Heart right ventricle (tissue), 16 donors: ENCODE measurements at regions of chr7 and their contacts with region 1.

Region 1: DNA sequence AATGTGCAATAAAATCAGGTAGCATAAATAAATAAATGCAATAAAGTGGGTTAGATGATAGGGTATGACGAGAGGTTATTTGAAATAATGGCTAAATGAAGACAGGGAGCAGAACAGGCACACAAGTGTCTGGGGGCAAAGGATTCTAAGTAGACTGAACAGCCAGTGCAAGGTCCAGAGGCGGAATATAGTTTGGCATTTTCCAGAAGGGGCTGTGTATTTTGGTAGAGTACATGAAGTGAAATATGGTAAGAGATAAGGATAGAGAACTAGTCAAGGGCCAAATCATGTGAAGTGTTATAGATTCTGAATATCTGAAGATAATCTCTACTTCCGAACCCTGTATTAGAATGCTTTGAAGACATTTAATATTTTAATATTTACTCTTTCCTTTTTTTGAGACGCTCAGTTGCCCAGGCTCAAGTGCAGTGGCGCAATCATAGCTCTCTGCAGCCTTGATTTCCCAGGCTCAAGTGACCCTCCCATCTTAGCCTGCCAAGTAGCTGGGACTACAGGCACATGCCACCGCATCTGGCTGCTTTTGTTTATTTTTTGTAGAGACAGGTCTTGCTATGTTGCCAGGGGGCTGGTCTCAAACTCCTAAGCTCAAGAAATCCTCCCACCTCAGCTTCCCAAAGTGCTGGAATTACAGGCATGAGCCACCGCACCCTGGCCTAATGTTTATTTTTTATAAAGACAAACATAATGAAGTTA is 44.4 kb upstream of the CD36 start:
- DNase-seq: peak in 1 of 2 donors; percentile 24
- ATAC-seq: peak in 6 of 8 donors; percentile 46 to 87 (median 64)
- H3K4me3 ChIP-seq: peak overlapping the region in 1 of 10 donors; percentile 7
- H3K27ac ChIP-seq: peak overlapping the region; percentile 45 to 87 (median 66)
- H3K4me1 ChIP-seq: peaks cover 2 to 78% (median 45%) of the 10 kb centered on the region in 9 donors
- H3K27me3 ChIP-seq: no peaks in the 10 kb centered on the region
- CTCF ChIP-seq: no peak

Region 2: DNA sequence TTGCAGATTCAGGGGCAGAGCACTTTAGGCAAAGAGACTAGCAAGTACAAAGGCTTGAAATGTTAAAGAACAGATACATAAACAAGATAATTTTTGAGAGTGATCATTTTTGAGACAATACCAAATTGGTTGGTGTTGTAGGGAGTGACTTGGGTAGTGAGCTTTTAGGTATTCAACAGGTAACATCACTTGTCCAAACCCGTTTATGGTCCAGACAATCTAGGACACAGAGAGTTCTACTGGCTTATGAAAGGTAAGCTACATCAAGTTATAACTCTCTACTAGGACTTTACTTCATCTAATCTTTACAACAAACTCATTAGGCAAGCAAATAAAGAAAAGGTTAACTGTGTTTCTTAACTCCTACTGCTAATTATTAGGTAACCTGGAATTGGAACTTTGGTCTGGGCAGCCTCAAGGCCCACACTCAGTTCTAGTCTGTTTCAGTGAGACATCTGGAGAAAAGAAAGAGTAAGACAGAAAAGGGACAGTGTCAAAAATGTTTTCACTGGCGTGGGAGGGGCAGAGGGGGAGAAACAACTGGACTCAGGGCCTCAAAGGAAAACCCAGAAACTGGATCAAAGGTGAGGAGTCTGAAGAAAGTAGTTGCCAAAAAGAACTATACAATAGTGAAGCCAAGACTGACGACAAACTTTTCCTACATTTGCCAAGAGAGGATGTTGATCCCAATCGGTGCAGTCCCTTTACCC is 121.4 kb before region 1 on chr7:
- intact Hi-C with region 1: loop called in 1 of 10 experiments (anchors 5 kb)
- DNase-seq: peak in 1 of 2 donors; percentile 34
- ATAC-seq: peak; percentile 30 to 78 (median 71)
- H3K4me3 ChIP-seq: no peak overlapping the region
- H3K27ac ChIP-seq: peak overlapping the region in 7 of 10 donors; percentile 7 to 63 (median 32)
- H3K4me1 ChIP-seq: peaks cover 0 to 54% (median 41%) of the 10 kb centered on the region in 9 donors
- H3K27me3 ChIP-seq: no peaks in the 10 kb centered on the region
- CTCF ChIP-seq: no peak

Region 3: GRCh38 chr7:80481200-80481884 is 112.7 kb before region 1 on chr7:
- intact Hi-C with region 1: loop called in 1 of 10 experiments (anchors 10 kb)
- DNase-seq: no peak
- ATAC-seq: peak in 6 of 8 donors; percentile 57 to 74 (median 62)
- H3K4me3 ChIP-seq: no peak overlapping the region
- H3K27ac ChIP-seq: peak overlapping the region in 7 of 10 donors; percentile 17 to 66 (median 49)
- H3K4me1 ChIP-seq: peaks cover 0 to 48% (median 16%) of the 10 kb centered on the region in 9 donors
- H3K27me3 ChIP-seq: no peaks in the 10 kb centered on the region
- CTCF ChIP-seq: no peak

Region 4: GRCh38 chr7:80499350-80499953 is 94.6 kb before region 1 on chr7:
- intact Hi-C with region 1: loop called in 1 of 10 experiments (anchors 10 kb)
- DNase-seq: peak; percentile 23 to 50
- ATAC-seq: peak; percentile 53 to 90 (median 87)
- H3K4me3 ChIP-seq: no peak overlapping the region
- H3K27ac ChIP-seq: peak overlapping the region in 9 of 10 donors; percentile 56 to 84 (median 68)
- H3K4me1 ChIP-seq: peaks cover 6 to 44% (median 33%) of the 10 kb centered on the region in 9 donors
- H3K27me3 ChIP-seq: no peaks in the 10 kb centered on the region
- CTCF ChIP-seq: no peak

Region 5: GRCh38 chr7:80563561-80564327 is 30.3 kb before region 1 on chr7:
- intact Hi-C with region 1: loop called in 1 of 10 experiments (anchors 5 kb)
- DNase-seq: no peak
- ATAC-seq: no peak
- H3K4me3 ChIP-seq: no peak overlapping the region
- H3K27ac ChIP-seq: no peak overlapping the region
- H3K4me1 ChIP-seq: peaks cover 0 to 5% (median 0%) of the 10 kb centered on the region in 9 donors
- H3K27me3 ChIP-seq: no peaks in the 10 kb centered on the region
- CTCF ChIP-seq: no peak